Activated naive CD4-positive, alpha-beta T cell treated with anti-CD3 and anti-CD28 coated beads for 36 hours (primary cell): ENCODE measurements at regions of chrX and their contacts with region 1.

Region 1: DNA sequence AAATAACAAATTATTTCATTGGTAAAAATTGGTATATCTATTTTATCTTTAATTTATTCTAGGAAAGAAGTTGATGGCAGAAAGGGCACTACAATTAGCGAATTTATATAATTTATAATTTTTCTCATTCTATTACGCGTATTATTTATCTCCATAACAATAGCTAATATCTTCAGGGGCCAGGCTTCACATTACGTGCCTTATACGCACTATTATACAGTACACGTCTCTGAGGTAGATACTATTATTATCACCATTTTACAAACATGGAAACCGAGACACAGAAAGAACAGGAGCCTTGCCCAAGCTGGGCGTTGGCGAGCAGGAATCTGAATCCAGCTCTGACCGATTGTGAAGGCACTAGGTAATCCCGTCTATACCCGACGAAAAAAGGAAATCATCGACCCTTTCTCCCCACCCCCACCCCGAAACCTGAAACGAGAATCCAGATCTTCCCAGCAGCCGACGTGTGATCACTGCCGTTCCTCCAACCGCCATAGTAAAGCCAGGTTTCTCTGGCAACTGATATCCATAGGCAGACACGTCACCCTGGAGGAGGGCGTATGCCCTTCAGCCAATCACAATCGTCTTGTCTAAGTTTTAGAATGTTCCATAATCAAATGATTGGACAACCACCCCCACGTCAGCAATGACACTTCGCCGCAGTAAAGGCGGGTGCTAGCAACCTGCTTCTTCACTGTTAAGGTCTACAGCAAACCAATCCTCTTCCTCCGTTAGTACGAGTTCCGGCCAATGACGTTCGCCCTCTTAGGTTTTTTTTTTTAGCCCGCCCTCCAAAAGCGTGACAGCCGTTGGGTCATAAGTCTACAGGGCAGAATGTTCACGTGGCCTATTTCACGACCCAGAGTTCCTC is at the start of gene MORF4L2:
- DNase-seq: peak; percentile 93
- H3K4me3 Mint-ChIP-seq: peak within 1 kb of the TSS; percentile 81
- H3K27ac Mint-ChIP-seq: peak within 1 kb of the TSS; percentile 90
- H3K4me1 Mint-ChIP-seq: peaks cover 11% of the 10 kb centered on the region
- H3K27me3 Mint-ChIP-seq: no peaks in the 10 kb centered on the region
- total RNA-seq, gene MORF4L2: 181 to 183 TPM

Region 2: GRCh38 chrX:103254921-103255493 is 431.4 kb before region 1 on chrX and contains the start of gene TCEAL8:
- CTCF ChIA-PET with region 1: no interaction called
- intact Hi-C with region 1: loop called (anchors 1 kb)
- DNase-seq: peak; percentile 79
- H3K4me3 Mint-ChIP-seq: peak within 1 kb of the TSS; percentile 94
- H3K27ac Mint-ChIP-seq: peak within 1 kb of the TSS; percentile 96
- H3K4me1 Mint-ChIP-seq: peaks cover 14% of the 10 kb centered on the region
- H3K27me3 Mint-ChIP-seq: no peaks in the 10 kb centered on the region
- total RNA-seq, gene TCEAL8: 24.5 to 27.7 TPM

Region 3: GRCh38 chrX:103367502-103367901 is 318.9 kb before region 1 on chrX:
- CTCF ChIA-PET with region 1: no interaction called
- intact Hi-C with region 1: no loop called
- DNase-seq: no peak
- H3K4me3 Mint-ChIP-seq: no peak overlapping the region
- H3K27ac Mint-ChIP-seq: no peak overlapping the region
- H3K4me1 Mint-ChIP-seq: no peaks in the 10 kb centered on the region
- H3K27me3 Mint-ChIP-seq: no peaks in the 10 kb centered on the region

Region 4: GRCh38 chrX:103554687-103555424 is 131.6 kb before region 1 on chrX:
- CTCF ChIA-PET with region 1: no interaction called
- intact Hi-C with region 1: loop called (anchors 1 kb)
- DNase-seq: peak; percentile 82
- H3K4me3 Mint-ChIP-seq: peak overlapping the region; percentile 80
- H3K27ac Mint-ChIP-seq: peak overlapping the region; percentile 54
- H3K4me1 Mint-ChIP-seq: no peaks in the 10 kb centered on the region
- H3K27me3 Mint-ChIP-seq: no peaks in the 10 kb centered on the region

Region 5: DNA sequence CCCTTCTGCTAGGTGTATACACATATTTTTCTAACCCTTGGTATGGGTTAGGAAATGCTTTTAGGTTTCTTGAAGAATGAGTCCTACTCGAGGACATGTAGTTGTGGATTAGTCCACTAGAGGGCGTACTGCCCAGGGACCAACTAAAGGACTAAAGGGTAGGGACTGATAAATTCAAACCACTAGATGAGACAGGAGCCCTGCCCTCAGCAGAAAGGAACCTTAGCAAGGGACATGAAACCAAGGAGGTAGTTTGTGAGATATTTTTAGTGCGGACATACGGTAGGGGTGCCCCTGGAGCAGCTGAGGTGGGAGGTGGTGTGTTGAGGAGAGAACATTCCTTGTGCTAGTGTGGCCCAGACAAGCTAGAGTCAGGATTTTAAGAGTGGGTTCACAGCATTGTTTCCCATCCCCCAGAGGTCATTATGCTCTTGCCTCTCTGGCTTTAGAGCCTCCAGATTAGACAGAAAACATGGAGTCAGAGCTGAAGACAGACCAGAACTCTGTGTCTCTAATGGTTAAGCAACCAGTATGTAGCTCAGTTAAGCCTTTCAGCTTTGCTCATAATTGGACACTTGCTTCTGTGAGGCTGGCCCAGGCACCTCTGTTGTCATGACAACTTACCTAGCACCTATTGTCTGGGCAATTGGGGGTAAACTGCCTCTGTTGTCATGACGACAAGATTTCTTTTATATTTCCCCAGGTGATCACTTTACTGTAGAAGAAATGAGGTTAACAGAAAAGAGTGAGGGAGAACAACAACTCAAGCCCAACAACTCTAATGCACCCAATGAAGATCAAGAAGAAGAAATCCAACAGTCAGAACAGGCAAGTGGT is 25.3 kb after region 1 on chrX:
- CTCF ChIA-PET with region 1: interaction called, 3 read pairs
- intact Hi-C with region 1: loop called (anchors 1 kb)
- DNase-seq: peak; percentile 60
- H3K4me3 Mint-ChIP-seq: no peak overlapping the region
- H3K27ac Mint-ChIP-seq: no peak overlapping the region
- H3K4me1 Mint-ChIP-seq: no peaks in the 10 kb centered on the region
- H3K27me3 Mint-ChIP-seq: peaks cover 3% of the 10 kb centered on the region

Region 6: GRCh38 chrX:103918581-103919269 is 232.3 kb after region 1 on chrX:
- CTCF ChIA-PET with region 1: no interaction called
- intact Hi-C with region 1: loop called (anchors 1 kb)
- DNase-seq: peak; percentile 73
- H3K4me3 Mint-ChIP-seq: peak overlapping the region; percentile 86
- H3K27ac Mint-ChIP-seq: peak overlapping the region; percentile 90
- H3K4me1 Mint-ChIP-seq: peaks cover 12% of the 10 kb centered on the region
- H3K27me3 Mint-ChIP-seq: no peaks in the 10 kb centered on the region

Region 7: DNA sequence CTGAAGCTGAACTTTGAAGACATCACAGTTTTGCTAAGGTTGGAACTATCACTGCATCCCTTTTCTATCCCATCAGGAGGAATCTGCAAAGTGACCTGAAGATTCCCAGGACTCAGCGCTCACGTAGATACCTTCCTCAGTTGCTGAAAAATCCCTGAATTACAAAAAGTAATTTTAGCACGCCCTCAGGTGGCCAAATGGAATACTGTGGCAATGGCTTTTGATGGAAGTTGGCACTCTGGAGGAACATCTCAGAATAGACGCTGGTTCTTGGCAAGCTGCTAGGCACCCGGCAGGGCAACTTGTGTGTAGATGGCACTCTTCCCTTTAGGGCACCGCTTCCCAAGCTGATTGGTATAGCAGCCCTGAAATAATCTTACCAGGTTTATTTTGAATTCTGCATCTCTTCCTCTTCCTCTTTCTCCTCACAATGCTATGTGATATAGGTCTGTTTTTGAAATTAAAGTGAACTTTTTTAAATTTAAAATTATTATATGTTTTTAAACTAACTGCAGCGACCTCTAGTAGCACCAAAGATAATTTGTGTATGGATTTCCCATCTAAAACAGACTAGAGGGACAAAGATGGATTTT is 584.6 kb after region 1 on chrX:
- CTCF ChIA-PET with region 1: no interaction called
- intact Hi-C with region 1: loop called (anchors 1 kb)
- DNase-seq: peak; percentile 64
- H3K4me3 Mint-ChIP-seq: peak overlapping the region; percentile 25
- H3K27ac Mint-ChIP-seq: no peak overlapping the region
- H3K4me1 Mint-ChIP-seq: peaks cover 4% of the 10 kb centered on the region
- H3K27me3 Mint-ChIP-seq: peaks cover 8% of the 10 kb centered on the region